PC-3 (cell line): ENCODE measurements at regions of chrX and their contacts with region 1.

Region 1: DNA sequence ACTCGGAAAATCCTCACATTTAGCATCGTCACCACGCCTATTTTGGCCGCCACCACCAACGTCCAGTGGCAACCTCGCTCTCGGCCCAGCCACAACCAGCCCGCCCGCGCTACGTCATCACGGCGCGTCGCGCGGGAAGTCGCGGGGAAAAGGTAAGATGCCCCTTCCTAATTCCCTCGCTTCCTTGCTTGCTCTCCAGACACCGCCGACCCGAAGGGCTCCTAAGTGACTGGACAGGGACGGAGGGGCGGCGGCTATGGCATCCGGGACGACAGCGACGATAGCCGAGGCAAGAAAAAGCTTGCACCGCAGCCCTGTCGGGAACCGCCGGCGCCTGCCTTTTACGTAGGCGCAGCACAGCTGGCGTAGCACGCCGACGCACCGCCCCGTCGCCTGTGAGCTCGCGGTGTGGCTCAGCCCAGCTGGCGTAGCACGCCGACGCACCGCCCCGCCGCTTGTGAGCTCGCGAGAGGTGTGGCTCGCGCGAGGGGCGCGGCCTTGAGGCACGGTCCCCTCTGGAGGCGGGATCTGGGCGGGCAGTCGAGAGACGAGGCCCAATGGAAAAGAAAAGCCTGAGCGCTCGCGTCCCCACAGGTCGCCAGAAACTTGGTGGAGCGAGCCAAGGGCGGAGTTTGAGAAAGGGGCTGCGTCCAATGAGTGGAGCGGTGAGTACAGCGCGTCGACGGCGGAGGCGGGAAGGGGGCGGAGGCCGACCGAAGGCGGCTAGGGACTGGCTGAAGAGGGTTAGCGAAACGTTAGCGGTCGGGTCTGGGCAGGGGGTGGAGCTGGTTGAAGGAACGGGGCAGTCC is at the start of gene HDAC6:
- DNase-seq: peak; percentile 98
- ATAC-seq: peak; percentile 85
- H3K4me3 ChIP-seq: peak within 1 kb of the TSS; percentile 81
- H3K27ac ChIP-seq: peak within 1 kb of the TSS; percentile 89
- H3K4me1 ChIP-seq: peaks cover 13% of the 10 kb centered on the region; the same call in 1 of the 2 replicates
- H3K27me3 ChIP-seq: no peaks in the 10 kb centered on the region
- CTCF ChIP-seq: no peak
- total RNA-seq, gene HDAC6: 58.0 and 61.7 TPM in 2 replicates

Region 2: DNA sequence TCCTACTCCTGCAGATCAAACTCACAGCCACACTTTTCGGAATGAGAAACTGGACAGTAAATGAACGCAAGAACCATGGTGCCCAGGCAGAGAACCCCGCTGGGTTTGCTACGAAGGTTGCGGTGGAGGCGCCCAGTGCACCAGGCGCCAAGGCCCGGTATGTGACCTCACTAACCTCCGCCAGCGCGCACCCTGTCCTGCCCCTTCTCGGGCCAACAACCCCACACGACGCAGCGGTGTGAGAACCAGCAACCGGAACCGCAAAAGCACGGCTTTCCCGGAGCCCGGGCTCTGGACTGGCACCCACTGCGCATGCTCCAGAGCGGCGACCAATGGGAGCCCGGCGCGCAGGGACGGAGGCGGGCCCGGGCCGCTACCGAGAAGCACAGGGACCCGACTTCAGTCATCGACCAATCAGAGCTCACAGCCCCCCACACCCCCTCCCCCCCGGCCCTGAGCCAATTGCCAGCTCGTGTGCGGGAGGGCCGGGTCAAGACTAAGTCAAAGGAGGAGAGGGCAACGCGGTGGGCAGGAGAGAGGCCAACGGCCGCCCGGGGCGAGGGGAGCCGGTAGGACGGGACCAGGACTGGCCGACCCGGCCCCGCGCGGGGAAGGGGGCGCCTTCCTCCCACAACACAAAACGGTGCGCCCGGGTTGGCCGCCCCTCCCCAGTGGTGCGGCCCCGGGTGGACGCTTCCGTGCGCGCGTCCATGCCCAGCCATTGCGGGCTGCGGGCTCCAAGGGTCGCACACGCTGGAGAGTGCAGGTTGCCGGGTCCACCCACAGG is 125.2 kb before region 1 on chrX:
- CTCF ChIA-PET with region 1: no interaction called
- POLR2A ChIA-PET with region 1: interaction called, 11 read pairs
- intact Hi-C with region 1: no loop called
- DNase-seq: peak; percentile 91
- ATAC-seq: peak; percentile 96
- H3K4me3 ChIP-seq: peak overlapping the region; percentile 98
- H3K27ac ChIP-seq: peak overlapping the region; percentile 36
- H3K4me1 ChIP-seq: peaks cover 5% of the 10 kb centered on the region; the same call in 1 of the 2 replicates
- H3K27me3 ChIP-seq: no peaks in the 10 kb centered on the region
- CTCF ChIP-seq: no peak

Region 3: DNA sequence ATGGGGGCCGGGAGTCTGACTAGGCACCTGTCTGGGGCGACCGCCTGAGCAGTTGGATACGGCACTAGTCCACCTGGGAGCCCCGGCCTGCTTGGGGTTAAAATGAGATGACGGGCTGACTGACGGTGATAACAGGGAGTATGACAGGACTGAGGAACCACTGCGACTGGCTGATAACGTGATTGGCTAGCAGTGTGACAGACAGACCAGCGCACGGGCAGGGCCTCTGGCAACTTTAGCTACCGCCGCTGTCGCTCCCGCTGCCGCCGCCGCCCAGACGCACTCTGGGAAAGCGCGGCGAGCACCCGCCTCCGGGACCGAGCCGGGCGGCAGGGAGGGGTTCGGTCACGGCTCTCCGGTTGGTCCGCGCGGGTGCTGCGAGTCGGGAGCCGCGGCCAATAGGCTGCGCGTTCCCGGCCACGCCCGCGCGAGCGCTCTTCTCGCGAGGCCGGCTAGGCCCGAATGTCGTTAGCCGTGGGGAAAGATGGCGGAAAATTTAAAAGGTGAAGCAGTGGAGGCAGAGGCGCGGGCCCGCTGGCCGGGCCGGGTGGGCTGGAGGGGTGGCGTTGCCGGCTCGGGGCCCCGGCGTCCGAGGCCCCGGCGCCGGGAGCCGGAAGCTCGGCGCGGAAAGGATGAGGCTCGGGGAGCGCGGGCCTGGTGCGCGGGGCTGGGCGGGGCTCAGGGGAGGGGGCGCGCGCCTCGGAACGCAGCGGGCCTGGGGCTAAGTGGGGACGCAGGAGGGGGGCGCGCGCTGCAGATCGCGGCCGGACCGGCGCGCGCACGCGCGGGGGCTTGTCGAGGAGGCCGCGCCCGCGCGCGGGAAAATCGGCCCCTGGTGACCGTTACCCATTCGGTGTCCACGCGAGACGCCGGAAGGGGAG is 104.9 kb before region 1 on chrX and contains the start of gene SUV39H1:
- CTCF ChIA-PET with region 1: no interaction called
- POLR2A ChIA-PET with region 1: interaction called, 4 read pairs
- intact Hi-C with region 1: loop called (anchors 1 kb)
- DNase-seq: peak; percentile 91
- ATAC-seq: peak; percentile 96
- H3K4me3 ChIP-seq: peak within 1 kb of the TSS; percentile 78
- H3K27ac ChIP-seq: peak within 1 kb of the TSS; percentile 64
- H3K4me1 ChIP-seq: peaks cover 12% of the 10 kb centered on the region
- H3K27me3 ChIP-seq: no peaks in the 10 kb centered on the region
- CTCF ChIP-seq: no peak
- total RNA-seq, gene SUV39H1: 22.3 and 31.7 TPM in 2 replicates

Region 4: DNA sequence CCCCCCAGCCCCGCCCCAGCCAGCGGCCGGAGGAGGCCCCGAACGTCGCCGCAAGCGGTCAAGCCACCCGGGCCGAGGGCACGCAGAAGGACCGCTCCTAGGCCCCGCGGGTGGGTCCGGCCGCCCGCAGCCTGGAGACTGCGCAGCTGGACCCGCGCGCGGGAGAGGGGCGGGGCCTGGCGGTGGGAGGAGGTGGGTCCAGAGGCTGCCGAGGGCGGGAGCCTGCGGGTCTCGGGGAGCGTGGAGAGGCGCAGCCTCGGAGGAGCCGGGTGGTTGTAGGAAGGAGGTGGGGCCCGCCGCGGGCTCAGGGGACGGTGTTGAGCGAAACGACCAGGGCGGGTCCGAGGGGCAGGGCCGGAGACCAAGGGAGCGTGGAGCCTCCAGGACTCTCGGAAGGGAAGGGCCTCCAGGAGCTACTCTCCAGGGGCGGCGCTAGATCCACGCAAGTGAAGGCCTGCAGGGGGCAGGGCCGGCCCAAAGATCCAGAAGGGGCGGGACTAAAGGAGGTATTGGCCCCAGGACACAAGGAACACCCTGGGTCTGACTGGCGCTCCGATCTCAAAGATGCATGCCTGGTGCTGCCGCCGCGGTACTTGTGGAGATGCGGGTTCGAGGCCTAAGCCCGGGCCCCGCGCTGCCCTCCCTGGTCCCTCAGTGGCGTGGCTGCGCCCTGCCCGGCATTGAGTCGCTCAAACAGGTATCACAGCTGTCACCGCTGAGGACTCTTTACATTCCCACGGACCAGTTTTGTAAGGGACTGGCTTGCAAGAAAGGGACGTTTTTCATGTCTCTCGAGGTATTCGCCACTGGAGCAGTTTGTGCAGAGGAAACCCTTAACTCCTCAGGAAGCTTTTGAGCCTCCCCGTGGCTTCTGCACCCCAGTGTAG is 90.2 kb after region 1 on chrX:
- CTCF ChIA-PET with region 1: no interaction called
- POLR2A ChIA-PET with region 1: interaction called, 4 read pairs
- intact Hi-C with region 1: loop called (anchors 2 kb)
- DNase-seq: peak; percentile 91
- ATAC-seq: peak; percentile 94
- H3K4me3 ChIP-seq: peak overlapping the region; percentile 64
- H3K27ac ChIP-seq: no peak overlapping the region
- H3K4me1 ChIP-seq: peaks cover 14% of the 10 kb centered on the region; the same call in 1 of the 2 replicates
- H3K27me3 ChIP-seq: no peaks in the 10 kb centered on the region
- CTCF ChIP-seq: peak; percentile 57

Region 5: GRCh38 chrX:48911412-48912182 is 110.1 kb after region 1 on chrX and contains the start of gene SLC35A2:
- CTCF ChIA-PET with region 1: no interaction called
- POLR2A ChIA-PET with region 1: interaction called, 3 read pairs
- intact Hi-C with region 1: loop called (anchors 5 kb)
- DNase-seq: peak; percentile 84
- ATAC-seq: peak; percentile 93
- H3K4me3 ChIP-seq: peak within 1 kb of the TSS; percentile 85
- H3K27ac ChIP-seq: peak within 1 kb of the TSS; percentile 91
- H3K4me1 ChIP-seq: peaks cover 16% of the 10 kb centered on the region
- H3K27me3 ChIP-seq: no peaks in the 10 kb centered on the region
- CTCF ChIP-seq: no peak
- total RNA-seq, gene SLC35A2: 46.6 and 46.8 TPM in 2 replicates